ENCODE measurements at regions of chr7 and their contacts with region 1.

Region 1: GRCh38 chr7:16645593-16646471 is at the starts of genes ANKMY2 and BZW2:
- DNase-seq: peak; percentile 92 to 94 (median 93)
- H3K4me3 ChIP-seq: peak within 1 kb of the TSS; percentile 75 to 96 (median 86)
- H3K4me3 Mint-ChIP-seq: peak within 1 kb of the TSS; percentile 100
- H3K27ac ChIP-seq: peak within 1 kb of the TSS; percentile 66 to 93
- H3K27ac Mint-ChIP-seq: peak within 1 kb of the TSS; percentile 91 to 99 (median 98)
- H3K4me1 ChIP-seq: peaks cover 28 to 38% of the 10 kb centered on the region in 2 donors
- H3K4me1 Mint-ChIP-seq: peaks cover 44% of the 10 kb centered on the region
- H3K27me3 ChIP-seq: no peaks in the 10 kb centered on the region
- H3K27me3 Mint-ChIP-seq: no peaks in the 10 kb centered on the region
- CTCF ChIP-seq: no peak
- polyA plus RNA-seq, gene ANKMY2: 4.8 to 7.5 (median 7.0) TPM
- polyA plus RNA-seq, gene BZW2: 19.0 to 45.2 (median 36.4) TPM

Region 2: DNA sequence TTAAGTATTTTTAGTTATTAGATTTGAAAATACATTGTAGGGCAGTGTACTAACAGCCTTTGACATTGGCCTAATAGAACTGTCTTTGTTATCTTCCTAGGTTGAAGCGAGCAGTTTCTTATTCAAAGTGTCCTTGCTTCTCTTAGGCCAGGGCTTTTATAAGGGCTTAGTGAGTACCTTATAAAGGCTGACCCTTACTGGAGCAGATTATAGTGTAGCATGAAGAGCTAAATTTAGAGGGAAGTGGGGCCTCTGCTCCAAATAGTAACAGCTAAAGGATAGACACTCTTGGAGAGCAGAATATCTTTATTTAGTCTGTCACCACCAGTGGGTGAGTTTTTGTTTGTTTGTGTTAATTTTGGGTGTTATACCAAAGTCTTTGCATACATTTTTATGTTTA is 16.1 kb after region 1 on chr7:
- intact Hi-C with region 1: loop called in 1 of 2 experiments (anchors 2 kb)
- DNase-seq: no peak
- H3K4me3 ChIP-seq: no peak overlapping the region
- H3K4me3 Mint-ChIP-seq: no peak overlapping the region
- H3K27ac ChIP-seq: peak overlapping the region in 1 of 2 donors; percentile 25
- H3K27ac Mint-ChIP-seq: no peak overlapping the region
- H3K4me1 ChIP-seq: peaks cover 12 to 13% of the 10 kb centered on the region in 2 donors
- H3K4me1 Mint-ChIP-seq: peaks cover 23% of the 10 kb centered on the region
- H3K27me3 ChIP-seq: no peaks in the 10 kb centered on the region
- H3K27me3 Mint-ChIP-seq: no peaks in the 10 kb centered on the region
- CTCF ChIP-seq: no peak

Region 3: GRCh38 chr7:16739863-16740622 is 94.2 kb after region 1 on chr7:
- intact Hi-C with region 1: no loop called
- DNase-seq: no peak
- H3K4me3 ChIP-seq: no peak overlapping the region
- H3K4me3 Mint-ChIP-seq: no peak overlapping the region
- H3K27ac ChIP-seq: no peak overlapping the region
- H3K27ac Mint-ChIP-seq: no peak overlapping the region
- H3K4me1 ChIP-seq: peaks cover 6 to 7% of the 10 kb centered on the region in 2 donors
- H3K4me1 Mint-ChIP-seq: peaks cover 5% of the 10 kb centered on the region
- H3K27me3 ChIP-seq: no peaks in the 10 kb centered on the region
- H3K27me3 Mint-ChIP-seq: peaks cover 0 to 4% (median 0%) of the 10 kb centered on the region in 3 donors
- CTCF ChIP-seq: no peak